ENCODE measurements at regions of chr10 and their contacts with region 1.

Region 1: DNA sequence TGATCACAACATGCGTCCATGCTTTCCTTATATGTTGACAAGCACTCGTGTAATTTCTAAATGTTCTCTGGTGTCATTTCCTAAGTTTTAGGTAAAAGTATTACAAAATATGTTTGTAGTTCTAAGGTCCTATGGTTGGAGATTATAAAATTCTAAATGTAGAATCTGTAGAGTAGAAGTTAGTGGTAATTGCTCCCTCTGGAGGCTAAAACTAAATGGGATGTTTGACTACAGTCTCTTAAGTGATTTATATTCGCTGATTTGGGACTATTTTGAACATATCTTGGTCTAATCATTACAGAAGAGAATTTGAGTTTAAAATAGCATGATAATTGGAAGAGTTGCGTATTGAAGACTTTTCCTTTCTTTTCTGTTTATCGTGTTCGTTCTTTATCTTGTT is 74.1 kb downstream of the ZMYND11 start:
- DNase-seq: no peak
- H3K4me3 ChIP-seq: no peak overlapping the region
- H3K27ac ChIP-seq: no peak overlapping the region
- H3K4me1 ChIP-seq: no peaks in the 10 kb centered on the region
- H3K27me3 ChIP-seq: no peaks in the 10 kb centered on the region
- CTCF ChIP-seq: peak; percentile 32; the same call in 1 of the 2 replicates

Region 2: DNA sequence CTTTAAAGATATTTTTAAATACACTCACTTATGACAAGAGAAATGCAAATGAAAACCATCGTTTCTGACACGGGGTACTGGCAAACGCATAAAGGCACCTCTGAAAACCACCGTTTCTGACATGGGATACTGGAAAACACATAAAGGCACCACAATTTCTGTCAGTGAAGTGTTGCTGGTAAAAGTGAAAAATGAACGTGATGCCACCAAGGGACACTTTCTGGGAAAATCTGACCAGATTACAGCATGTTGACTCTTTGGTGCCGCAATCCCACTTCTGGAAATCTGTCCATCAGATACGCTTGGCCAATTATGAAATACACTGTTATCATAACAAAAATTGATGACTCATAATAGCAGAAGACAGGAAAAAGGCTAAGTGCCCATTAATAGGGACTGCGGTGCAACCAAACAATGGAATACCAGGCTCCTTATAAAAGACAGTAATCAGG is 57.6 kb after region 1 on chr10:
- CTCF ChIA-PET with region 1: no interaction called
- POLR2A ChIA-PET with region 1: no interaction called
- intact Hi-C with region 1: no loop called
- DNase-seq: peak; percentile 9 to 40
- H3K4me3 ChIP-seq: no peak overlapping the region
- H3K27ac ChIP-seq: no peak overlapping the region
- H3K4me1 ChIP-seq: no peaks in the 10 kb centered on the region; the same call in 1 of the 2 replicates
- H3K27me3 ChIP-seq: peaks cover 33% of the 10 kb centered on the region
- CTCF ChIP-seq: no peak

Region 3: DNA sequence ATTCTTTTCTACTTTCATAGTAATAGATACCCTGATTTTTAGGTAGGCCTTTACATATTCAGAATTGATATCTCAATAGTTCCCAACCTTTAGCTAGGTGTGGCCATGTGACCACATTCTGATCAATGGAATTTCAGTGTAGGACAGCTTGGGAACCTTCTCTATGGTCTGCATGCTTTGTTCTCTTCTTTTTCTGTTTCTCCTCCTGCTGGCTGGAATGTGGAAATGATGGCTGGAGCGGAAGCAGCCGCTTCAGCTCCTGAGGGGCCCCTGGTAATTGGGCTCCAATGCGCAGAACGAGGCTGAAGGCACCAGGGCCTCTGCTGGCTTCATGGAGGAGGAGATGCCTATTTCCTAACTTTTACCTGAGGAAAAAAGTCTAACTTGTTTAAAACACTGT is 78.5 kb after region 1 on chr10:
- CTCF ChIA-PET with region 1: no interaction called
- POLR2A ChIA-PET with region 1: no interaction called
- intact Hi-C with region 1: no loop called
- DNase-seq: no peak
- H3K4me3 ChIP-seq: no peak overlapping the region
- H3K27ac ChIP-seq: no peak overlapping the region
- H3K4me1 ChIP-seq: no peaks in the 10 kb centered on the region
- H3K27me3 ChIP-seq: peaks cover 86% of the 10 kb centered on the region
- CTCF ChIP-seq: peak; percentile 43; the same call in 1 of the 2 replicates

Region 4: DNA sequence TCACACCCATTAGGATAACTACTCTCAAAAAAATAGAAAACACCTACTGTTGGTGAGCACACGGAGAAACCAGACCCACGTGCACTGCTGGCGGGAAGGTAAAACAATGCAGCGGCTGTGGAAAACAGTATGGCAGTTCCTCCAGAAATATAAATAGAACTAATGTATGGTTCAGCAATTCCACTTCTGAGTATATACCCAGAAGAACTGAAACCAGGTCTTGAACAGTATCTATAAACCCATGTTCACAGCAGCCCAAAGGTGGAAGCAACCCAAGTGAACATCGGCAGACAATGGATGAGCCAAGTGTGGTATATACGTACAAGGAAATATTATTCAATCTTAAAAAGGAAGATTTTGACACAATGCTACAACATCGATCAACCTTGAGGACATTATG is 90.6 kb after region 1 on chr10:
- CTCF ChIA-PET with region 1: no interaction called
- POLR2A ChIA-PET with region 1: no interaction called
- intact Hi-C with region 1: no loop called
- DNase-seq: no peak
- H3K4me3 ChIP-seq: no peak overlapping the region
- H3K27ac ChIP-seq: no peak overlapping the region
- H3K4me1 ChIP-seq: no peaks in the 10 kb centered on the region
- H3K27me3 ChIP-seq: peaks cover 41% of the 10 kb centered on the region
- CTCF ChIP-seq: no peak

Region 5: GRCh38 chr10:372607-373006 is 163.2 kb after region 1 on chr10:
- CTCF ChIA-PET with region 1: no interaction called
- POLR2A ChIA-PET with region 1: interaction called, 20 read pairs
- intact Hi-C with region 1: no loop called
- DNase-seq: no peak
- H3K4me3 ChIP-seq: no peak overlapping the region
- H3K27ac ChIP-seq: no peak overlapping the region
- H3K4me1 ChIP-seq: no peaks in the 10 kb centered on the region
- H3K27me3 ChIP-seq: peaks cover 61% of the 10 kb centered on the region; the same call in 1 of the 2 replicates
- CTCF ChIP-seq: no peak